ENCODE measurements at regions of chr7 and their contacts with region 1.

Region 1: GRCh38 chr7:4973728-4974198 is 14.8 kb upstream of the MMD2 start:
- DNase-seq: peak; percentile 96
- ATAC-seq: peak; percentile 98
- H3K4me3 Mint-ChIP-seq: peak overlapping the region; percentile 97
- H3K27ac Mint-ChIP-seq: peak overlapping the region; percentile 92
- H3K4me1 Mint-ChIP-seq: peaks cover 31% of the 10 kb centered on the region
- H3K27me3 Mint-ChIP-seq: no peaks in the 10 kb centered on the region

Region 2: GRCh38 chr7:4797858-4798705 is 175.7 kb before region 1 on chr7:
- CTCF ChIA-PET with region 1: interaction called, 3 read pairs
- POLR2A ChIA-PET with region 1: no interaction called
- intact Hi-C with region 1: loop called in 1 of 2 experiments (anchors 5 kb)
- DNase-seq: peak; percentile 79
- ATAC-seq: peak; percentile 92
- H3K4me3 Mint-ChIP-seq: no peak overlapping the region
- H3K27ac Mint-ChIP-seq: no peak overlapping the region
- H3K4me1 Mint-ChIP-seq: peaks cover 4% of the 10 kb centered on the region
- H3K27me3 Mint-ChIP-seq: no peaks in the 10 kb centered on the region

Region 3: DNA sequence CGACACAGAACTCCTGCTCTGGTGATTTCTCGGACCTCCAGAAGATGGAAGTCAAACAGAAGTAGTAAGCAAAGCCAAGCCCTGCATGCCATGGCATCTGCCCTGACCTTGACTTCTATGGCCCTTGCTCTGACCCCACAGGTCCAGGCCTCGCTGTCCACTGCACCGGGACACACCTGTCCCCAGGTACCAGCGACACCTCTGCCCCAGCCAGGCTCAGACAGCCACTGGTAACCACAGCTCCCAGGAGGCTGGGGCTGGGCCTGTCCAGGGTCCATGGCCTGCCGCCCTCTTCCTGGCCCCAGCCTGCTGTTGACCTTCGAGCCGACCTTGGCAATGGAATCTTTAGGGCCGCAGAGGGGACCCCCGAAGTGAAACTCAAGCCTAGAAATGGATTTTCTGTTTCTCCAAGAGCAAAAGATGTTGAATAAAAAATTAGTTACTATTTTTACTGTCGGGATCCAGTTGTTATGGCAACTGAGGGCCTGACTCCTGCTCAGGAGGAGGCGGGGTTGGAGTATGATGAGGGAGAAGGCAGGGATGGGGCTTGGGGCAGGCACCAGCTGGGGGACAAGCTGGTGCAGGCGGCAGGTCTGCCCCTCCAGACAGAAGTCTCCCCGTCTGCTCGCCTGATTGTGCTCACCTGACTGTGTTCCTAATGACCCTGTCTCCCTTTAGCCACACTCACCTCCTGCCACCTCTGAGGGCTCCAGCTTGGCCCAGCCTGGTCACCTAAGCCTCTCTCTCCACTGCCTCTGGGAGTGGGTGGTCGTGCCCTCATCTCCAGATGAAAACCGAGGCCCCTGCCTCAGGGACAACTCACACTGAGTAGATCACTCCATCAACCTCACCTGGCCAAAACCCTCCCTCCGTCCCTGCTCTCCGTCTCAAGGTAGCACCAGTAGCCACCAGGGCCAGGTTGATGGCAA is 10.6 kb before region 1 on chr7:
- CTCF ChIA-PET with region 1: no interaction called
- POLR2A ChIA-PET with region 1: no interaction called
- intact Hi-C with region 1: no loop called
- DNase-seq: no peak
- ATAC-seq: no peak
- H3K4me3 Mint-ChIP-seq: no peak overlapping the region
- H3K27ac Mint-ChIP-seq: no peak overlapping the region
- H3K4me1 Mint-ChIP-seq: peaks cover 5% of the 10 kb centered on the region
- H3K27me3 Mint-ChIP-seq: peaks cover 16% of the 10 kb centered on the region

Region 4: GRCh38 chr7:5045558-5046396 is 72.0 kb after region 1 on chr7 and contains the start of gene RBAK:
- CTCF ChIA-PET with region 1: interaction called, 5 read pairs
- POLR2A ChIA-PET with region 1: no interaction called
- intact Hi-C with region 1: loop called in 1 of 2 experiments (anchors 1 kb)
- DNase-seq: peak; percentile 94
- ATAC-seq: peak; percentile 100
- H3K4me3 Mint-ChIP-seq: peak within 1 kb of the TSS; percentile 91
- H3K27ac Mint-ChIP-seq: peak within 1 kb of the TSS; percentile 92
- H3K4me1 Mint-ChIP-seq: peaks cover 41% of the 10 kb centered on the region
- H3K27me3 Mint-ChIP-seq: no peaks in the 10 kb centered on the region
- total RNA-seq, gene RBAK: 12.4 to 12.7 TPM

Region 5: DNA sequence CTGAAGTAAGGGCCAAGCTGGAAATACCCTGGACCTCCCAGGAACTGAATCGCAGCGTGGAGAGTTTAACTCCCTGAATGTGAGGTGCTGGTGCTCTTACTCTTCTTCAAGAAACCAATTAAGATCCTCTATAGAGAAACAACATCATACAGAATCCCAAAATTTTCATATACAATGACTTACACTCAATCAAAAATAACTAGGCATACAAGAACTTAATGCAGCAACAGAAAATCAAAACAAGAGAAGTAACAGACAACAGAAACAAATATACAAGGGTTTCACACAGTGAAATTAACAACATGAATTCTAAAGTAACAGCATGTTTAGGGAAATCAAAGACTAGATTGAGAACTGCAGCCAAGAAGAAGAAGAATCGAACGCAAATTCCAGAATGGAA is 770.0 kb after region 1 on chr7:
- CTCF ChIA-PET with region 1: no interaction called
- POLR2A ChIA-PET with region 1: no interaction called
- intact Hi-C with region 1: loop called in 1 of 2 experiments (anchors 10 kb)
- DNase-seq: no peak
- ATAC-seq: no peak
- H3K4me3 Mint-ChIP-seq: no peak overlapping the region
- H3K27ac Mint-ChIP-seq: no peak overlapping the region
- H3K4me1 Mint-ChIP-seq: no peaks in the 10 kb centered on the region
- H3K27me3 Mint-ChIP-seq: no peaks in the 10 kb centered on the region

Measured in activated CD4-positive, alpha-beta T cell treated with anti-CD3 and anti-CD28 coated beads for 36 hours (primary cell).